ENCODE measurements at regions of chr1 and their contacts with region 1.

Region 1: DNA sequence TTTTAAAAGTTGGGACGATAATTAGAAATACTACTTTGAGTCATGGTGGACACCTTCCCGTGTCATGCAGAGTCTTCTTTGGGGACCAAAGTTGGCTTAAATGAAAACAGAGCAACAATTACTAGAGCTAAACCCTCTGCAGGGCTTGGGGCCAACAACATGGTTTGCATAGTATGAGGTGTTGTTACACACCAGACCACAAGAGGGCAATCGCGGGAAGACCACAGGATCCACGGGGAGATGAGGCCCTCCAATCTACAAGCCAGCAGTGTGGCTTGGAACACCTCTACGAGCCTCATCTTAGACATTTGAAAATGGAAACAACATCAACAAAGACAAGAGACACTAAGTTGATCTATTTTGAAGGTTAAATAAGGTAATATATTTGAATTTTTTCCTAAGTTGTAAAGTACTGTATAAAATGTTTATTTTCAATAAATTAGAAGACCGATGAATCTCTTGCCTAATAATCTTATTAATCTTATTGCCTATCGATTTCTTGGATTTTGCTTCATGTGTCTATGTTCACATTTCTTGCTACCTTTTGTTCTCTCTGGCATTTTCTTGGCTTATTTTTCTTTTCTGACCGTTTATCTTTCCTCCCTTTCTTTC is 8.2 kb upstream of the SMCP start:
- DNase-seq: peak; percentile 77
- ATAC-seq: peak; percentile 80
- H3K4me3 Mint-ChIP-seq: no peak overlapping the region
- H3K27ac Mint-ChIP-seq: no peak overlapping the region
- H3K4me1 Mint-ChIP-seq: no peaks in the 10 kb centered on the region
- H3K27me3 Mint-ChIP-seq: peaks cover 1% of the 10 kb centered on the region
- CTCF ChIP-seq: peak; percentile 79

Region 2: GRCh38 chr1:152926091-152926490 is 56.2 kb after region 1 on chr1:
- CTCF ChIA-PET with region 1: interaction called, 11 read pairs
- POLR2A ChIA-PET with region 1: no interaction called
- intact Hi-C with region 1: no loop called
- DNase-seq: no peak
- ATAC-seq: no peak
- H3K4me3 Mint-ChIP-seq: no peak overlapping the region
- H3K27ac Mint-ChIP-seq: no peak overlapping the region
- H3K4me1 Mint-ChIP-seq: no peaks in the 10 kb centered on the region
- H3K27me3 Mint-ChIP-seq: peaks cover 13% of the 10 kb centered on the region
- CTCF ChIP-seq: no peak

Region 3: DNA sequence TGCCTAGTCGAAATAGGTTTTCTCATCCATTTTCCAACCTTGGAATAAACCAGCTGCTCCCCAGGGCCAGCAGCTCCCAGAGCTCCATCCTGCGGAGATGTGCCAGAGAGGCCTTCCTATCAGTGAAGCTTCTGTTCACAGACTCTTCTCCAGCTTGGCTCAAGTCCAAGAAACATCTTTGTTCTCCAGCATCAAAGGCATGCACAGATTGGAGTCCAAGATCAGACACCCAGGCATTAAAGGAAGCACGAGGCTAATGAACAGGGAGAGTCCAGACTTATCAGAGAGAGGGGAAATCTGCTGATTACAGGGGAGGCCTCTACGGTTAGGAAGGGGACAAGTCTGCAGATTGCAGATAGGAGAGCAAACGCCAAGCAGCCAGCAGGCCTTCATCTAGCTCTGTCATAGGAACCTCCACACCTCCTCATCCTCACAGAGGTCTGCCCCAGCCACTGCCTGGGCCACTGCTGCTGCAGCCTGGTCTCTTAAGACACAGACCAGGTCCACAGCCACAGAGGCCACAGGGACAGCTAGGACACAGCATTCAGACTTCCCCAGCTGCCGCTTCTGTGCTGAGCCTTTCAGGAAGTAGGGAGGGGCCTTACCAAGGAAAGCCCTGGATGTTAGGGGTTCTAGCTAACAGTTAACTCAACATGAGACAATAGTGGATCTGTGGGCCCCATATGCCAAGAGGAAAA is 350.8 kb after region 1 on chr1:
- CTCF ChIA-PET with region 1: no interaction called
- POLR2A ChIA-PET with region 1: no interaction called
- intact Hi-C with region 1: loop called (anchors 10 kb)
- DNase-seq: no peak
- ATAC-seq: no peak
- H3K4me3 Mint-ChIP-seq: no peak overlapping the region
- H3K27ac Mint-ChIP-seq: no peak overlapping the region
- H3K4me1 Mint-ChIP-seq: no peaks in the 10 kb centered on the region
- H3K27me3 Mint-ChIP-seq: peaks cover 8% of the 10 kb centered on the region
- CTCF ChIP-seq: no peak

Measured in activated CD8-positive, alpha-beta T cell treated with anti-CD3 and anti-CD28 coated beads for 36 hours (primary cell).